MCF 10A (cell line): ENCODE measurements at regions of chr6 and their contacts with region 1.

Region 1: GRCh38 chr6:55953335-55953734 is 77.9 kb upstream of the BMP5 start:
- DNase-seq: peak; percentile 61
- H3K4me3 Mint-ChIP-seq: peak overlapping the region; percentile 38
- H3K27ac Mint-ChIP-seq: no peak overlapping the region
- H3K4me1 Mint-ChIP-seq: no peaks in the 10 kb centered on the region
- H3K27me3 Mint-ChIP-seq: no peaks in the 10 kb centered on the region
- CTCF ChIP-seq: peak; percentile 47

Region 2: GRCh38 chr6:55276745-55277530 is 676.4 kb before region 1 on chr6:
- CTCF ChIA-PET with region 1: interaction called, 90 read pairs
- POLR2A ChIA-PET with region 1: no interaction called
- intact Hi-C with region 1: loop called (anchors 1 kb)
- DNase-seq: peak; percentile 72
- H3K4me3 Mint-ChIP-seq: no peak overlapping the region
- H3K27ac Mint-ChIP-seq: no peak overlapping the region
- H3K4me1 Mint-ChIP-seq: no peaks in the 10 kb centered on the region
- H3K27me3 Mint-ChIP-seq: no peaks in the 10 kb centered on the region
- CTCF ChIP-seq: peak; percentile 64

Region 3: DNA sequence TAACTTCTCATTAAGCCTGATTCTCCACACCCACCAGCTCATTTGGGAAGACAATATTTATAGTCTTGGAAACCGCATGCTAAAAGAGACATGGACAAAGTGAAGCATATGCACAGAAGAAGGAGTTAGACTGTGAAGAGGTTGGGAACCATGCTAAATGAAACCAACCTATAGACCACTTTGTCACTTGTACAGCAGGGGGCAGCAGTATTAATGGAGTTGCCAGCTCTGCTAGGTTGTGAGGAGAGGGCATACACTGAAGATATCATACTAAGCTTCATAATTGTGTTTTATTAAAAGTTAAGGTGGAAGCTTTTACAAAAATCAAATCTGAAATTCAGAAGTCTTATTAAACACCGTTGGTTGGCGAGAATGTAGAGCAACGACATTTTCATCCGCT is 336.1 kb before region 1 on chr6:
- CTCF ChIA-PET with region 1: interaction called, 7 read pairs
- POLR2A ChIA-PET with region 1: no interaction called
- intact Hi-C with region 1: loop called (anchors 5 kb)
- DNase-seq: peak; percentile 70
- H3K4me3 Mint-ChIP-seq: no peak overlapping the region
- H3K27ac Mint-ChIP-seq: no peak overlapping the region
- H3K4me1 Mint-ChIP-seq: peaks cover 4% of the 10 kb centered on the region
- H3K27me3 Mint-ChIP-seq: no peaks in the 10 kb centered on the region
- CTCF ChIP-seq: peak; percentile 43

Region 4: GRCh38 chr6:55853008-55854001 is 100.0 kb before region 1 on chr6:
- CTCF ChIA-PET with region 1: no interaction called
- POLR2A ChIA-PET with region 1: no interaction called
- intact Hi-C with region 1: no loop called
- DNase-seq: no peak
- H3K4me3 Mint-ChIP-seq: no peak overlapping the region
- H3K27ac Mint-ChIP-seq: no peak overlapping the region
- H3K4me1 Mint-ChIP-seq: no peaks in the 10 kb centered on the region
- H3K27me3 Mint-ChIP-seq: no peaks in the 10 kb centered on the region
- CTCF ChIP-seq: no peak

Region 5: GRCh38 chr6:55866108-55866507 is 87.2 kb before region 1 on chr6:
- CTCF ChIA-PET with region 1: no interaction called
- POLR2A ChIA-PET with region 1: no interaction called
- intact Hi-C with region 1: no loop called
- DNase-seq: peak; percentile 10
- H3K4me3 Mint-ChIP-seq: no peak overlapping the region
- H3K27ac Mint-ChIP-seq: no peak overlapping the region
- H3K4me1 Mint-ChIP-seq: peaks cover 40% of the 10 kb centered on the region
- H3K27me3 Mint-ChIP-seq: no peaks in the 10 kb centered on the region
- CTCF ChIP-seq: no peak